Heart right ventricle (tissue), 16 donors: ENCODE measurements at regions of chr11 and their contacts with region 1.

Region 1: DNA sequence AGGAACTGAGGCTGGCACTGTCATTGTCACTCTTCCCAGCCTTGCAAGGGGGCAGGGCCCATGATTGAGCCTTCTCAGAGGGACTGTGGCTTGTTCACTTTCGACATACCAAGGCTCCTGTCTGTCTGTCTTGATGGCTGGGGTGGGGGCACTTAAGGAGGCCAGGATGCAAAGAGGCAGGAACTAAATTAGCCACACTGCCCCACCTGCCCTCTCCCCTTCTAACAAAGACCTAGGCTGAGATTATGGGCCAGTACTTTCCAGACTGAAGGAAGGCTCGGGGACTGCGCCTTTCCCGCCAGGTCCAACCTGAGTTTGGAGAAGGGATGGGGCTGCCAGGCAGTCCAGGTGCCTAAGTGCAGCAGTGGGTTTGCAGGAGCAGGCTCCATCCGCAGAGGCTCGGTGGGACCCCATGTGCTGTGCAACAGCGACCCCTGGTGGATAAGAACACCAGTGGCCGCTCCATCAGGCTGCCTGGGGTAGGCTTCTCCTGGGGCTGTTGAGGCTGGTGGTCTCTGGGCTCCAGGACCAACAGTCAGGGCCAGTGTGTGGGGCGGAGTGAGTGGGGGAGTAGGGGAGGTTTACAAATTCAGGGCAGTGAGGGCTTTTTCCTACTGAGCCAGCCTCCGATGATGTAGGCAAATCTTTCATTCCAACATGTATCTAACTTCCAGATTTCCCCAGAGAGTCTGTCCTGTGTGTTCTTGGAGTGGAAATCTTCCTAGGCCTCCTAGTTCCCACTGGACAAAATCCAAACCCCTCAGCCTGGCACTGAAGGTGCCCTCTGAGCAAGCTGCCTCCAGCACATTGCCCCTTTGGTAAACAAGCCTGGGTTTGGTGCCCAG is 93.9 kb downstream of the INSC start:
- DNase-seq: peak; percentile 60 to 66
- ATAC-seq: peak; percentile 67 to 94 (median 91)
- H3K4me3 ChIP-seq: no peak overlapping the region
- H3K27ac ChIP-seq: no peak overlapping the region
- H3K4me1 ChIP-seq: no peaks in the 10 kb centered on the region
- H3K27me3 ChIP-seq: peaks cover 0 to 5% (median 0%) of the 10 kb centered on the region in 7 donors
- CTCF ChIP-seq: peak; percentile 63 to 94 (median 86)

Region 2: DNA sequence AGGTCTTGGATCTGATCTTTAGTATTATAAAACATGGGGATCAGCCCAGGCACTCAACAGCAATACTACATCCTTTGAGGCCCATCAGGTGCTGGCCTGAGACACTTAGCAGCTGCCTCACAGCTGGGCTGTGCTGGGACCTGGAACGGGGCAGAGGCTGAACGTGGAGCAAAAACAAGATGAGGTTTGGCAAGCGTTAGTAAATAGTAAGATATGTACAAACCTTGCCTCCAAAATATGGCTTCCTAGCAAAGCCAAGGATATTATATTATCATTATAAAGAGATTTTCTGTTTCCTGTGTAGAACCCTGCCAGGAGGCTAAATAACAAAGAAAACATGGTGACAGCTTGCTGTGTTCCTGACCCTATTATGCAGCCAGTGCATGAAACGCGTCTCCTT is 1306.1 kb before region 1 on chr11:
- intact Hi-C with region 1: loop called in 1 of 10 experiments (anchors 10 kb)
- DNase-seq: peak in 1 of 2 donors; percentile 11
- ATAC-seq: peak in 5 of 8 donors; percentile 49 to 80 (median 74)
- H3K4me3 ChIP-seq: no peak overlapping the region
- H3K27ac ChIP-seq: no peak overlapping the region
- H3K4me1 ChIP-seq: peaks cover 0 to 4% (median 0%) of the 10 kb centered on the region in 9 donors
- H3K27me3 ChIP-seq: no peaks in the 10 kb centered on the region
- CTCF ChIP-seq: no peak

Region 3: DNA sequence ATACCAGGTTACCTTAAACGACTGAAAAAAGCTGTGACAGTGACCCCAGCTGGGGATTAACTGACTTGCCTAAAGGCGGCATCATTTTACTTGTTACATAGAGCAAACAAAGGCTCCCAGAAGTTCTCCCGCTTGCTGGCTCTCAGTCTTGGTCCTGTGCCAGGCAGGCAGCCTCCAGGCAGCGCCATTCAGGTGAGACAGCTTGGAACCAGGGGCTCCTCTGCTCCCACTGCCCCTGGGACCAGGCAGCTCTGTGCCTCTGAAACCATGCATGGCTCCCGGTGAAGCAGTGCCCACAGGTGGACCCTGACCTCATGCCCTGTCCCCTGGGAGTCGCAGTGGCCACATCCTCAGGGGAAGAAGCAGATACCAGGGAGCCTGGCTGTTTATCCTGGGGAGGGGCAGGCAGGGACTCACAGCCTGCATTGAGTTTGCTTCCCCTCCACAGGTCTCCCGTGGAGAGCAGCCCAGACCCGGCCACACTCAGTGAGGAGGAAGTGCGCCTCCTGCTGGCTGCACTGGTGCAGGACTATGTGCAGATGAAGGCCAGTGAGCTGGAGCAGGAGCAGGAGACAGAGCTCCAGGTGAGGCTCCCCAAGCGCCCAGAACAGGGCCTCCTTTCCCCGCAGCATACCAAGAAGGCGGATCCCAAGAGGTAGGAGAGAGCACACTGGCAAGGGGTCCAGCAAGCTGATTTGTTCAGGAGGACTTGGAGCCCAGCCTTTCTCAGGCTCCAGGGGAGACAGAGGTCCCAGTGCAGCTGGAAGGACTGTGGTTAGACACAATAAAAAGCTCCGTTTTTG is 301.0 kb before region 1 on chr11:
- intact Hi-C with region 1: loop called in 3 of 10 experiments (anchors 5 kb)
- DNase-seq: peak; percentile 64 to 83
- ATAC-seq: peak; percentile 40 to 75 (median 72)
- H3K4me3 ChIP-seq: no peak overlapping the region
- H3K27ac ChIP-seq: no peak overlapping the region
- H3K4me1 ChIP-seq: peaks cover 0 to 19% (median 12%) of the 10 kb centered on the region in 9 donors
- H3K27me3 ChIP-seq: peaks cover 0 to 8% (median 0%) of the 10 kb centered on the region in 7 donors
- CTCF ChIP-seq: peak; percentile 52 to 90 (median 76)

Region 4: GRCh38 chr11:15101072-15101709 is 107.4 kb before region 1 on chr11:
- intact Hi-C with region 1: loop called (anchors 1 to 2 kb)
- DNase-seq: peak; percentile 41 to 50
- ATAC-seq: peak; percentile 49 to 87 (median 78)
- H3K4me3 ChIP-seq: no peak overlapping the region
- H3K27ac ChIP-seq: no peak overlapping the region
- H3K4me1 ChIP-seq: no peaks in the 10 kb centered on the region
- H3K27me3 ChIP-seq: peaks cover 0 to 37% (median 14%) of the 10 kb centered on the region in 7 donors
- CTCF ChIP-seq: peak; percentile 71 to 94 (median 91)

Region 5: DNA sequence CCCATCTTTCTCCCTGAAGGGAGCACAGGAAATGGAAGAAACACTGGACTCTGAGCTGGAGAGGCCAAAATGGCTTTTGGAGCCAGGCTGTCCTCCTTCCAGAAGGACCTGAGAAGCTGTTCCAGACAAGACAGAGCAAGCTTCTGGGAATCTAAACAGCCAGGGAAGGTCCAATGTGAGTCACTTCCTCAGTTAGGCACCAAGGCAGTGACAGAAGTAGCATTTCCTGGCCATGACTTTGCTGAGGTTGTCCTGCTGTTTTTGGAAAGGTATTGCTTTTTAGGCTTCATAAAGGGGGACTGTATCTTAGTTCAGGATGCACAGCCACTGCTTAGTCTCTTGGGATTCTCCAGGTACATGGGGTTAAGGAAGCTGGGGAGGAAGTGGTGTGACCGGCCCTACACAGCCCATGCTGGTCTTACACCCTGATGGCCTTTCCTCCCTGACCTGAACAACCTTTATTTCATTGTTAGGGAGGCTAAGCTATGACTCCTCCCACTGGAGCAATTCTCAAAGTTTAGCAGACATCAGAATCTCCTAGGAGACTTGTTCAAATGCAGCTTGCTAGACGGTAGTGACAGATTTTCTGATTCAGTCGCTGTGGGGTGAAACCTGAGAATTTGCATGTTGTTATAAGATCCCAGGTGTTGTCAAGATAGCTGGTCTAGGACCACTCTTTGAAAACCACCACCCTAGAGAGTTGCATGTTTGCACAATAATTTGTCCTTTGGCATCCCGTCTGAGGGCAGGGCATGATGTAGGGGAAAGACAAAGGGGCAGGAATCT is 100.7 kb before region 1 on chr11:
- intact Hi-C with region 1: loop called in 3 of 10 experiments (anchors 2 kb)
- DNase-seq: no peak
- ATAC-seq: no peak
- H3K4me3 ChIP-seq: no peak overlapping the region
- H3K27ac ChIP-seq: no peak overlapping the region
- H3K4me1 ChIP-seq: no peaks in the 10 kb centered on the region
- H3K27me3 ChIP-seq: no peaks in the 10 kb centered on the region
- CTCF ChIP-seq: no peak